Dendritic cell treated with granulocyte-macrophage colony-stimulating factor and Interleukin-4, amounts not matched to agents 40 ng/mL and 50 ng/mL, for 4 days (primary cell): ENCODE measurements at regions of chr7 and their contacts with region 1.

Region 1: DNA sequence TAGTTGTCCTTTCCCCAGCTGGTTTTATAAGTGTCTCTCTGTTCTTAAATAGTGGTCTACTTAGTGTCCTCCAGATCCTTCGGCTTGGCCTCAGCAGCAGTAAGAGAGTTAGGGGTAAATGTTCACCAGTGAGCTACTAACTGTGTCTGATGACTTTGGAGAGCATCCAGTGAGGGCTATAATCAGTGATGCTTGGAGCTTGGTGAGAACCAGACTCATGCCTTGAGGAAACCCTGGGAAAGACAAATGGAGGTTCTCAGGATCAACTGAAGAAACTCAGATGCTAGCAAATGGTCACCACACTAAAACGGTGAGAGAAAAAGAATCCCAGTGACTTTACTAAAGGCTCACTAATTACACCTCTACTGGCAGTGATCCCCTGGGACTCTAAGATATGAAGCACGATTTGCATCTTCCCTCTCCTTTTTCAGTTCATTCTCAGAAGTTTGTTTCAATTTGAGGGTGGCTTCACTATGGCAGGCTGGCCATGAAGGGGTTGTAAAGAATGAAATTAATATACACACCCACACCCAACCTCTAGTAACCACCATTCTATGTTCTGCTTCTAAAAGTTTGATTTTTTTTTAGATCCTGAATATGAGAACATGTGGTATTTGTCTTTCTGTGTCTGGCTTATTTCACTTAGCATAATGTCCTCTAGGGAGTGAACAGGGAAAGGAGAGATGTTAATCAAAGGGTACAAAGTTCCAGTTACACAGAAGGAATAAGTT is 177.9 kb downstream of the PDE1C start:
- H3K4me3 Mint-ChIP-seq: no peak overlapping the region
- H3K27ac Mint-ChIP-seq: no peak overlapping the region
- H3K4me1 Mint-ChIP-seq: peaks cover 11% of the 10 kb centered on the region
- H3K27me3 Mint-ChIP-seq: peaks cover 7% of the 10 kb centered on the region

Region 2: GRCh38 chr7:31811650-31812461 is 80.4 kb before region 1 on chr7:
- intact Hi-C with region 1: loop called (anchors 5 kb)
- H3K4me3 Mint-ChIP-seq: no peak overlapping the region
- H3K27ac Mint-ChIP-seq: peak overlapping the region; percentile 82
- H3K4me1 Mint-ChIP-seq: peaks cover 27% of the 10 kb centered on the region
- H3K27me3 Mint-ChIP-seq: no peaks in the 10 kb centered on the region

Region 3: DNA sequence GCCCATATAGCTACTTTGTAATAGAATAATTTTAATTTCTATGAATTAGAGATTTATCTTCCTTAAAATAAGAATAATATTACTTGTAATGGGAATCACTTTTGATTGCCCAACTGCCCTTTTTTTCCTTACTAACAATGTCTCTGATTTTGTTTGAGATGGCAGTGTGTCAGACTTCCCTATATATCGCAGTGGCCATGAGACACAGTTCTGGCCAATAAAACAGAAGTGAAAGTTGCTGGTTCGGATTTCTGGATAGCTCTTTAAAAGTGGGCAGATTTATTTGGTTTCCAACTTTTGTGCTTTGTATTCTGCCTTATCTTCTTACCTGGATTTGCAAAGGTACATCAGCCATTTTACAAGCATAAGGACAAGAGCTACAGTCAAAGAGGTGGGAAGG is 35.1 kb before region 1 on chr7:
- intact Hi-C with region 1: loop called (anchors 5 kb)
- H3K4me3 Mint-ChIP-seq: no peak overlapping the region
- H3K27ac Mint-ChIP-seq: peak overlapping the region; percentile 49
- H3K4me1 Mint-ChIP-seq: peaks cover 20% of the 10 kb centered on the region
- H3K27me3 Mint-ChIP-seq: peaks cover 1% of the 10 kb centered on the region

Region 4: DNA sequence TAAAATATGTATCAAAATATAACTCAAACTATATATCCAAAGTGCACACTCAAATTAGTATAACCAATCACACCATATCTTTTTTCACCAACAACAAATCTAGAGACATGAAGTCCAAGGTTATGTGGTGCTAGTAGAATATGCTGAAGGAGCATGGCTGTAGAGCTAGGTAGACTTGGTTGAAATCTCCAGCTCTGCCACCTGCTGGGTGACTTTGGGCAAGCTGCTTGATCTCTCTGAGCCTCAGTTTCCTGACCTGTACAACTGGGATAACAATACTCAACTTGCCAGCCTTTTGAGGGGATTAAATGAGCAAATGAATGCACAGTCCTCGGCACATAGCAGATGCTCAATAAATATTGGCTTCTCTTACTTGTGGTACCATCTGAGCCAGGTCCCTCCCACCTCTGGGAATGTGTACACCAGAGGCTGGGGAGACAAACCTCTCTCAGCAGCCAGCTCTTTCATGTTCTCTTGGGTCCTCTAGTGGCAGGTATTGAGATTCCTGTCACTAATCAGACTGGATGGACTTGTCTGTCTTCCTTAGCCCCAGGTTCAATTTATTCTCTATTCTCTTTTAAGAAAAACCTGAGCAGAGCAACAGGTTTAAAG is 272.2 kb after region 1 on chr7:
- intact Hi-C with region 1: no loop called
- H3K4me3 Mint-ChIP-seq: no peak overlapping the region
- H3K27ac Mint-ChIP-seq: no peak overlapping the region
- H3K4me1 Mint-ChIP-seq: no peaks in the 10 kb centered on the region
- H3K27me3 Mint-ChIP-seq: no peaks in the 10 kb centered on the region